ENCODE measurements at regions of chr12 and their contacts with region 1.

Region 1: DNA sequence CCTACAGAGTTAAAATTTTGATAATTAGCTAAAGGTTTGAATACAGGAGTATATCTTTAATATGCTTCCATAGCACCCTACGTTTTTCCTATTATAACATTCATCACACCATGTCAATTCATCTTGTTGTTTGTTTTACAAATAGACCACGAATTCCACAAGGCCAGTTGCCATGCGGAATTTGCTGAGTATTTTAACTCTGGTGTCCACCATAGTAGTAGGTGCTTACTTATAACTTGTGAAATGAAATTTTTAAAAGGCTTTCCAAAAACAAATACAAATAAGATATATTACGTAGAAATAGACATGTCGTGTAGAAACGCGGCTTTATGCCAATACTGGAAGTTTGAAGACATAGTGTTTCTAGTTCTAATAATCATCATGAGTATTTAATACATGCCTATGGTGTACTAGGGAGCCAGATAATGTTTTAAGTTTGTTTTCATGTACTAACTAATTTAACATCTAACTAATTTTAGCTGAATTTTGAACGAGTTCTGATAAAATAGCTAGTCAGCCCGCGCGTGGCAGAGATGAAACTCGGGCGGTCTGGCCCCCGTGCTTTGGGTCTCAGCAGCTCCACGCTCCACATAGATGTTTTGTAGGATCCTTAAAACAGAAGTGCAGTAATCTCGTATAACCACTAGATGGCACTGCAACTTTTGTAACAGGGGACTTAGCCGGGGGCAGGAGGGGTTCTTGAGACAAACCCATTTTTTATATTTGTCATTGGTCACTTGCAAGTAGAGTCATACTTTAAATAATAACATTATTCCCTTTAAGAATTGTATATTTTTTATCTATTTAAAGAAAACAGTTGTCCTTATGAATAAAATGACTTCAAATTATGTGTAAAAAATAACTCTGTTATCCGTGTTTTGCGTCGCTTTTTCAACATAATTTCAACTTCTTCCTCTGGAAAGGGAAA is 10.2 kb downstream of the CD69 start:
- DNase-seq: peak; percentile 82 to 90 (median 90)
- H3K4me3 ChIP-seq: peak overlapping the region in 5 of 7 experiments; percentile 10 to 69 (median 54)
- H3K27ac ChIP-seq: peak overlapping the region in 1 of 2 experiments; percentile 43
- H3K4me1 ChIP-seq: peaks cover 5 to 39% (median 12%) of the 10 kb centered on the region in 4 experiments
- H3K27me3 ChIP-seq: no peaks in the 10 kb centered on the region

Region 2: GRCh38 chr12:9797722-9798619 is 47.4 kb after region 1 on chr12:
- CTCF ChIA-PET with region 1: interaction called, 437 read pairs
- POLR2A ChIA-PET with region 1: interaction called, 22 read pairs
- DNase-seq: peak; percentile 91 to 96 (median 93)
- H3K4me3 ChIP-seq: no peak overlapping the region
- H3K27ac ChIP-seq: peak overlapping the region in 1 of 2 experiments; percentile 27
- H3K4me1 ChIP-seq: peaks cover 29 to 59% (median 47%) of the 10 kb centered on the region in 4 experiments
- H3K27me3 ChIP-seq: no peaks in the 10 kb centered on the region

Region 3: DNA sequence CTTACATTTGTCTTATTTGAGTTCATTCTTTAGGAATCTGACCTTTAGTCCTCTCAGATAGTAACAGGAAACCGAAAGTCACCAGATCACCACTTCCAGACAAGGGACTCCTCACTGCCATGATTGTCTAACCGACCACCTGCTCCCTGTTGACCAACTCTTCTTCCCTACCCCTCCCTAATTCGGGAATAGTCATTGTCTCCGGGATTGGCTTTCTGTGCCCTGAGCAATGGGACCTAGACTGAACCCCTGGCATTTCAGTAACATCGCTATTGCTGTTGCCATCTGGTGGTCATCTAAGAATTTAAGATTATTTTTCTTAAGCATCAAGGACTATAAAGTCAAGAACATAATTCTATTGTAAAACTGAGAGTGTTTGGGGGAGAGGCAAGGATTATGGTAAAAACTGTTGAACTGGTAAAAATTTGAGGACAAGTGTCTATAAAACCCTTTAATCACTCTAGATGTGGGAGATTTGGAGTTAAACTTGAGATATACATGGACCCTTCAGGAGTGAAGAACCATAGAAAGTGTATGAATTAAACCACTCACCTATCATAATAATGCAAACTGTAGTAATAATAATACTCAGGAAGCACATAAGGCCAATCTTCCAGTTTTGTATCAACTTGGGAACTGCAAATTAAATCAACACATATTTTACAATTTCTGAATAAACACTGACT is 175.3 kb after region 1 on chr12:
- CTCF ChIA-PET with region 1: interaction called, 24 read pairs
- POLR2A ChIA-PET with region 1: no interaction called
- DNase-seq: peak; percentile 56 to 64 (median 57)
- H3K4me3 ChIP-seq: peak overlapping the region in 6 of 7 experiments; percentile 33 to 72 (median 43)
- H3K27ac ChIP-seq: no peak overlapping the region
- H3K4me1 ChIP-seq: peaks cover 0 to 21% (median 2%) of the 10 kb centered on the region in 4 experiments
- H3K27me3 ChIP-seq: no peaks in the 10 kb centered on the region

Region 4: GRCh38 chr12:10012630-10013330 is 262.2 kb after region 1 on chr12:
- CTCF ChIA-PET with region 1: interaction called, 13 read pairs
- POLR2A ChIA-PET with region 1: no interaction called
- DNase-seq: no peak
- H3K4me3 ChIP-seq: no peak overlapping the region
- H3K27ac ChIP-seq: no peak overlapping the region
- H3K4me1 ChIP-seq: peaks cover 0 to 15% (median 8%) of the 10 kb centered on the region in 4 experiments
- H3K27me3 ChIP-seq: no peaks in the 10 kb centered on the region

Measured in common myeloid progenitor, CD34-positive (primary cell).